ENCODE measurements at regions of chr19 and their contacts with region 1.

Region 1: DNA sequence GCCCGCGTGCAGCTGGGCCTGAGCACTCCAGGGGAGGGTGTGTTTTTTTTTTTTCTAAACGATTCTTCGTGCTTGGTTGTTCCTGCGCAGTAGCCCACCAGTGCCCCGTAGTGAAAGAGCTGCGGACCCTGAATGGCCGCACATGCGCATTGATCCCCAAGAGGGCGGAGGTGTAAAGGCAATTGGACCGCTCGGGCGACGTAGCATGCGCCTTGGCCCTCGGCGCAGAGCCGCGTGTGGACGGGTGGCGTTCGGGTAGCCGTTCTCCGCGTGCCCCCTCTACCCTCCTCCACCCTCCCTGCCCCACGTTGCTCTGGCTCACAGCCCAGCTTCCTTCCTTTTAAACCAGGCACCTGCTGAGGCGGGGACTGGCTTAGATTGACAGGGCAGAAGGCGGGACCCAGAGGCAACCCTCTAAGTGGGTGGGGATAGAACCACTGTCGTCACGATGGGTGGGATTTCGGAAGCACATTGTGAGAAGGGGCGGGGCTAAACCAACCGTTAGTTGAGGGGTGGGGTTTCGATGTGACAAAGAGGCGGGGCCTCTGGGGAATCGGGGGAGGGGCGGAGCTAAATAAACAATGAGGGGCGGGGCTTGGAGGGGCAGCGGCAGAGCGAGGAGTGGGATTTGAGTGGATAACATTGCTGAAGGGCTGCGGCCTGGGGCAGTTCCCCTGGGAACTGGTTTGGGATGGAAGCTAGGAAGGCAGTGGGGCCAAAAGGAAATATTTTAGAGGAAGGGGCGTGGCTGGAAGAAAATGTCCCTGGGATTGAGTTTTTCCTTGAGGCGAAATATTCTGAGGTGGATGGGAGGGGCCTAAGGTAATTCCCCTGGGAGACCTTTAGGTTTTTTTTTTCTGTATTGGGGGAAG is 543 bp upstream of the NUP62 start:
- DNase-seq: peak; percentile 98 to 100
- ATAC-seq: peak; percentile 76 to 87
- H3K4me3 ChIP-seq: peak overlapping the region; percentile 70
- H3K27ac ChIP-seq: peak overlapping the region; percentile 95 to 96
- H3K4me1 ChIP-seq: peaks cover 16% of the 10 kb centered on the region
- CTCF ChIP-seq: no peak
- EP300 ChIP-seq: no peak
- POLR2A ChIP-seq: peak; percentile 96
- RAD21 ChIP-seq: no peak

Region 2: DNA sequence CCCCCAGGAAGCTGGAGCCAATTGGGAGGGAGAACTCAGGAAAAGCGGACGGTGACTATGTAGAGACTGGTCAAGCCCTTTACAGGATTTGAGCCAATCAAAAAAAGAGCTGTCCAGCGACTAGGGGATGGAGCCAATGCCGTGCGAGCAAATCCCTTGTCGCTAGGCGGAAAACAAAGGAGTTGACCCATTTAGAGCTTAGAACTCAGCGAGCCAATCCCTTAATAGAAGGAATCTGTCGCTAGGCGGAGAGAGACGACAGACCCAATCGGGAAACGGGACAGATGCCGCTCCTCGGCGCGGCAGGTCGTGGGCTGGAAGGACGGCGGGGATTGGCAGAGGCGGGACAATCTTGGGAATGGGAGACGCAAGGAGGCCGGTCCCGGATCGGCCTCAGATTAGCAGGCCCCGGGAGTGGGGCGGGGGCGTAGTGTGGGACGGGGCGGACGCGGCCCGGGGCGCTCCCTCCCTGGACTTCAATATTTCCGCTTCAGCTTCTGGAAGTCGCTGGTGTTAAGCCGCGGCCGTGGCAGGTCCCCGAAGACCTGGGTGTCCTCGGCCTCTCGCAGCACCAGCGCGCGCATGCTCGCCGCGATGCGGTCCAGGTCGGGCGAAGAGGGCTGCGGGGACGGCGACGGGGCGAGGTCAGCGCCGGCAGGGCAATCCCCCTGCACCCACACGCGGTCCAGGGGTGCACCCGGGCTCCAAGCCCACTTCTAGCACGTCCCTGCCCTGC is 60.2 kb before region 1 on chr19:
- CTCF ChIA-PET with region 1: no interaction called
- POLR2A ChIA-PET with region 1: interaction called, 11 read pairs
- DNase-seq: peak; percentile 99 to 100
- ATAC-seq: peak; percentile 68 to 82
- H3K4me3 ChIP-seq: peak overlapping the region; percentile 46
- H3K27ac ChIP-seq: peak overlapping the region; percentile 93 to 94
- H3K4me1 ChIP-seq: peaks cover 37% of the 10 kb centered on the region
- CTCF ChIP-seq: no peak
- EP300 ChIP-seq: no peak
- POLR2A ChIP-seq: peak; percentile 63
- RAD21 ChIP-seq: no peak

Region 3: DNA sequence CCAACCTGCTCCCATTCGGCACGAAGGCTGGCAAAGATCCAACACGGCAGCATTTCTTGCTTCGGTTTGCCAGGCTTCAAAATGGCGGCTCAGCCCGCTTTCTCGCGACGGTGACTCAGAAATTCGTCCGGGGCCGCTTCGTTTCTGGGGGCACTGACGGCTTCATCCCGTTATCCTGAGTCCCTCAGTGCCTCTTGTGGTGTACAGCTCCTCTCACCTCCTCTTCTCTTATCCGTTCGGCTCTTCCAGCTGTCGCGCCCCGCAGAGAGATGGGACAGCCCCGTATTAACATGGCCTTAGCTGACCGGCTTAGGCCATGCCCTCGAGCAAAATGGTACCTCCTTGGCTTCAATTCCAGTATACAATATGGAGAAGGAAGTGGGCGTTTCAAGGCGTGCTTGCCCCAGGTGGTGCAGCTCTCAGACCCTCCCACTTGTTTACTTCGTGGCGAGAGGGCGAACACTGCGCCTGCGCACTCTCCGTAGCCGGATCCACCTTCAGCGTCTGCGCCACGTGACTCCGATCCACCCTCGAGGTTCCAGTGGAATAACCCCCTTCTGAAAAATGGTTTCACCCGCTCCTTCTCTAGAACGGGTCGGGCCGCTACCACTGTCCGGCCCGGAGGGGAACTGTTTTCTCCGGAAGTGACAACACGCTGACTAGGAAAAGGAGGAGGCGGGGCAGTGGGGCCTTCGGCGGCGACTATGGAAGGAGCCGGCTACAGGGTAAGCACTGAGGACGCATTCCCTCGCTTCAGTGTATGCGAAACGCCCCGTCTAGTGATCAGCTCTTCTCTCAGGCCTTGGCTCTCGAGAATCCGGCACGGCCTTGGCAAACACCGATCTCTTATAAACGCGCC is 52.6 kb before region 1 on chr19 and contains the starts of genes AKT1S1 and TBC1D17:
- CTCF ChIA-PET with region 1: no interaction called
- POLR2A ChIA-PET with region 1: interaction called, 30 read pairs
- DNase-seq: peak; percentile 100
- ATAC-seq: peak; percentile 66 to 82
- H3K4me3 ChIP-seq: peak within 1 kb of the TSS; percentile 95
- H3K27ac ChIP-seq: peak within 1 kb of the TSS; percentile 98 to 99
- H3K4me1 ChIP-seq: peaks cover 21% of the 10 kb centered on the region
- CTCF ChIP-seq: no peak
- EP300 ChIP-seq: no peak; a peak in 1 of 5 replicates
- POLR2A ChIP-seq: peak; percentile 70
- RAD21 ChIP-seq: no peak
- polyA plus RNA-seq, gene AKT1S1: 39.2 and 41.5 TPM in 2 replicates
- polyA plus RNA-seq, gene TBC1D17: 12.3 and 18.0 TPM in 2 replicates

Region 4: DNA sequence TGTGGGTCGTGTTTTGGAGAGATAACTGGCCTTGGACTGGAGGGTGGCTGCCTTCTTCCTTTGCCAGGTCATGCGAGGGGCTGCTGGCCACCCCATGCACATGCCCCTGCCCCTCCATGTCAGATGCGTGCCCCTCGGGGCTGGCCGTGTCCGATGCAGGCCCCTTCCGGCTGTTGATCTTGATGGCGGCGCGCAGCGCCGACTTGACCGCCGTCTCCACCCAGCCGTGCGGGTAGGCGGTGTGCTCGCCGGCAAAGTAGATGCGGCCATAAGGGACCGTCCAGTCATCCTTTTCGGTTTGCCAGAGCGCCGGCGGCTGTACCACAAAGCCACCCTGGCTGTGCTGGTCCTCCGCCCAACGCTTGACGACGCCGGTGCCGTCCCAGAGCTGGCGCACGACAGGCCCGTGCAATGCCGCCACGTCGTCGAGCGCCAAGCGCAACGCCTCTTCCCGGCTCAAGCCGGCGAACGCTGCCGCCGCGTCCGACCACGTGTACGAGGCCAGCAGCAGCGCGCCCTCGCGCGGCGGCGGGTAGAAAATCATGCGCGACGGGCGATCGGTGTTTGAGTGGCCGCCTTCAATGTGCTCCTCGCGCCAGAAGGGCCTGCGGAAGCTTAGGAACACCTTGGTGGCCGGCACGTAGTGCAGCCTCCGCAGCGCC is 40.0 kb before region 1 on chr19:
- CTCF ChIA-PET with region 1: interaction called, 26 read pairs
- POLR2A ChIA-PET with region 1: interaction called, 11 read pairs
- DNase-seq: peak; percentile 61 to 94
- ATAC-seq: peak; percentile 55 to 79
- H3K4me3 ChIP-seq: peak overlapping the region; percentile 44
- H3K27ac ChIP-seq: peak overlapping the region; percentile 26 to 72; a peak in 5 of 6 replicates
- H3K4me1 ChIP-seq: peaks cover 6% of the 10 kb centered on the region; the same call in 1 of the 3 replicates
- CTCF ChIP-seq: peak; percentile 88
- EP300 ChIP-seq: no peak
- POLR2A ChIP-seq: no peak
- RAD21 ChIP-seq: peak; percentile 42 to 51; a peak in 3 of 5 replicates

Region 5: GRCh38 chr19:49916842-49917733 is 12.8 kb before region 1 on chr19:
- CTCF ChIA-PET with region 1: interaction called, 5 read pairs
- POLR2A ChIA-PET with region 1: interaction called, 22 read pairs
- DNase-seq: no peak
- ATAC-seq: peak; percentile 25 to 42; a peak in 3 of 6 replicates
- H3K4me3 ChIP-seq: no peak overlapping the region
- H3K27ac ChIP-seq: no peak overlapping the region
- H3K4me1 ChIP-seq: no peaks in the 10 kb centered on the region
- CTCF ChIP-seq: peak; percentile 23; the same call in 1 of the 3 replicates
- EP300 ChIP-seq: no peak
- POLR2A ChIP-seq: no peak
- RAD21 ChIP-seq: peak in 1 of 2 experiments; percentile 28; a peak in 1 of 5 replicates

Measured in A549 (cell line).